CD4-positive, alpha-beta T cell (primary cell): ENCODE measurements at regions of chr21 and their contacts with region 1.

Region 1: DNA sequence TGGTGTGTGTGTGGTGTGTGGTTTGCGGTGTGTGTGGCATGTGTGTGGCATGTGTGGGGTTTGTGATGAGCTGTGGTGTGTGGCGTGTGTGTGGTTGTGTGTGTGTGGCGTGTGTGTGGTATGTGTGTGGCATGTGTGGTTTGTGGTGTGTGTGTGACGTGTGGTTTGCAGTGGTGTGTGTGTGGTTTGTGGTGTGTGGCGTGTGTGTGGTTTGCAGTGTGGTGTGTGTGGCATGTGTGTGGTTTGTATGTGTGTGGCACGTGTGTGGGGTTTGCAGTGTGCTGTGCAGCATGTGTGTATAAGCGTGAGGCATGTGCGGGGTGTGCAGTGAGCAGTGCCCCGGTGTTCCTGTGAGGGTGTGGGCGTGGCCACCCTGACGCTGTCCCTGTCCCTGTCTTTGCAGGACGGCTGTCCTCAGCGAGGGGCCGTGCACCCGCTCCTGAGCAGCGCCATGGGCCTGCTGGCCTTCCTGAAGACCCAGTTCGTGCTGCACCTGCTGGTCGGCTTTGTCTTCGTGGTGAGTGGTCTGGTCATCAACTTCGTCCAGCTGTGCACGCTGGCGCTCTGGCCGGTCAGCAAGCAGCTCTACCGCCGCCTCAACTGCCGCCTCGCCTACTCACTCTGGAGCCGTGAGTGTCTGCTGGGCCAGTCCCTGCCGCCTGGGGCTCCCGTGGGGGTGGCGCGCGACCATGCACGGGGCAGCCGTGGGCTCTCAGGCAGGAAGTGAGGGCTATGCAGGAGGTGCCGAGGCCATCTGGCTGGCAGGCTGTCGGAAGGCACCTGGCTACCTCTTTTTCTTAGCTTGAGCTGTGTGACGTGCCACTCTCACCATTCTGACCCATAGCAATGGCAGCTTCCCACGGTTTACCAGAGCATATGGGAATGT is 52.6 kb upstream of the TRAPPC10 start:
- DNase-seq: peak in 1 of 14 experiments; percentile 39
- ATAC-seq: no peak
- H3K4me3 ChIP-seq: no peak overlapping the region
- H3K4me3 Mint-ChIP-seq: no peak overlapping the region
- H3K27ac ChIP-seq: no peak overlapping the region
- H3K27ac Mint-ChIP-seq: peak overlapping the region; percentile 87
- H3K4me1 ChIP-seq: peaks cover 17% of the 10 kb centered on the region
- H3K4me1 Mint-ChIP-seq: peaks cover 30% of the 10 kb centered on the region
- H3K27me3 ChIP-seq: no peaks in the 10 kb centered on the region
- H3K27me3 Mint-ChIP-seq: no peaks in the 10 kb centered on the region
- CTCF ChIP-seq: no peak

Region 2: GRCh38 chr21:43728467-43729390 is 230.7 kb before region 1 on chr21:
- CTCF ChIA-PET with region 1: no interaction called
- POLR2A ChIA-PET with region 1: no interaction called
- intact Hi-C with region 1: loop called in 1 of 2 experiments (anchors 10 kb)
- DNase-seq: peak; percentile 40 to 94 (median 72)
- ATAC-seq: peak; percentile 85
- H3K4me3 ChIP-seq: peak overlapping the region; percentile 55
- H3K4me3 Mint-ChIP-seq: peak overlapping the region; percentile 90
- H3K27ac ChIP-seq: peak overlapping the region; percentile 43 to 72
- H3K27ac Mint-ChIP-seq: peak overlapping the region; percentile 97
- H3K4me1 ChIP-seq: peaks cover 70% of the 10 kb centered on the region
- H3K4me1 Mint-ChIP-seq: peaks cover 65% of the 10 kb centered on the region
- H3K27me3 ChIP-seq: no peaks in the 10 kb centered on the region
- H3K27me3 Mint-ChIP-seq: no peaks in the 10 kb centered on the region
- CTCF ChIP-seq: peak; percentile 25

Region 3: DNA sequence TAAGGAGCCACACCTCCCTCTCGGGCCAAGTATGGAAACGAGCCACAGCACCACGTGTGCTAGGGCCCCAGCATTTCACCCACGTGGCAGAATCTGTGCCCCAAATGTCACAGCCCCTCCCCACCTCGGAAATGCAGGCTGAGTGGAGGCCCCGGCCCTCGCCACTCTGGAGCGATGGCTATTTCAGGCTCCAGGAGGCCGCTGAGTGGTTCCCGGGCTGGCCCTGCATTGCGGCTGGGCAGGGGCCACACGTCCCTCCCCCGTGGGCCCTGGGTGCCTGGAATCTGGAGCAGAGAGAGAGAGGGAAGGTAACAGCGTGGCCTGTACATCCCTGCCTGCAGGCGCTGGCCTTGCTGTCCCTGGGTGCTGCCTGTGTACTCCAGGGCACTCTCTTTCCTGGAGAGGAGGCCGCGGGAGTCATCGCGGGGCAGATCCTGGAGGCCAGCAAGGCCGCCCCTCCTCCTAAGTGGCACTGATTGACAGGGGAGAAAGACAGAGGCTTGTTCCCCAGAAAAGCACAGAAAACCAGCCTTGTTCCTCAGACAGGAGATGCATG is 15.3 kb before region 1 on chr21:
- CTCF ChIA-PET with region 1: no interaction called
- POLR2A ChIA-PET with region 1: no interaction called
- intact Hi-C with region 1: no loop called
- DNase-seq: no peak
- ATAC-seq: no peak
- H3K4me3 ChIP-seq: no peak overlapping the region
- H3K4me3 Mint-ChIP-seq: no peak overlapping the region
- H3K27ac ChIP-seq: no peak overlapping the region
- H3K27ac Mint-ChIP-seq: no peak overlapping the region
- H3K4me1 ChIP-seq: peaks cover 6% of the 10 kb centered on the region
- H3K4me1 Mint-ChIP-seq: peaks cover 7% of the 10 kb centered on the region
- H3K27me3 ChIP-seq: no peaks in the 10 kb centered on the region
- H3K27me3 Mint-ChIP-seq: no peaks in the 10 kb centered on the region
- CTCF ChIP-seq: no peak

Region 4: GRCh38 chr21:44039828-44040227 is 80.4 kb after region 1 on chr21:
- CTCF ChIA-PET with region 1: no interaction called
- POLR2A ChIA-PET with region 1: no interaction called
- intact Hi-C with region 1: no loop called
- DNase-seq: no peak
- ATAC-seq: no peak
- H3K4me3 ChIP-seq: no peak overlapping the region
- H3K4me3 Mint-ChIP-seq: no peak overlapping the region
- H3K27ac ChIP-seq: no peak overlapping the region
- H3K27ac Mint-ChIP-seq: no peak overlapping the region
- H3K4me1 ChIP-seq: no peaks in the 10 kb centered on the region
- H3K4me1 Mint-ChIP-seq: peaks cover 19% of the 10 kb centered on the region
- H3K27me3 ChIP-seq: no peaks in the 10 kb centered on the region
- H3K27me3 Mint-ChIP-seq: no peaks in the 10 kb centered on the region
- CTCF ChIP-seq: no peak